Uterus (tissue), 4 donors: ENCODE measurements at regions of chr19 and their contacts with region 1.

Region 1: GRCh38 chr19:3324321-3324856 is 42.0 kb upstream of the NFIC start:
- DNase-seq: no peak
- H3K4me3 ChIP-seq: no peak overlapping the region
- H3K27ac ChIP-seq: no peak overlapping the region
- H3K4me1 ChIP-seq: no peaks in the 10 kb centered on the region
- H3K27me3 ChIP-seq: no peaks in the 10 kb centered on the region
- CTCF ChIP-seq: peak; percentile 35 to 57 (median 55)
- POLR2A ChIP-seq: no peak

Region 2: DNA sequence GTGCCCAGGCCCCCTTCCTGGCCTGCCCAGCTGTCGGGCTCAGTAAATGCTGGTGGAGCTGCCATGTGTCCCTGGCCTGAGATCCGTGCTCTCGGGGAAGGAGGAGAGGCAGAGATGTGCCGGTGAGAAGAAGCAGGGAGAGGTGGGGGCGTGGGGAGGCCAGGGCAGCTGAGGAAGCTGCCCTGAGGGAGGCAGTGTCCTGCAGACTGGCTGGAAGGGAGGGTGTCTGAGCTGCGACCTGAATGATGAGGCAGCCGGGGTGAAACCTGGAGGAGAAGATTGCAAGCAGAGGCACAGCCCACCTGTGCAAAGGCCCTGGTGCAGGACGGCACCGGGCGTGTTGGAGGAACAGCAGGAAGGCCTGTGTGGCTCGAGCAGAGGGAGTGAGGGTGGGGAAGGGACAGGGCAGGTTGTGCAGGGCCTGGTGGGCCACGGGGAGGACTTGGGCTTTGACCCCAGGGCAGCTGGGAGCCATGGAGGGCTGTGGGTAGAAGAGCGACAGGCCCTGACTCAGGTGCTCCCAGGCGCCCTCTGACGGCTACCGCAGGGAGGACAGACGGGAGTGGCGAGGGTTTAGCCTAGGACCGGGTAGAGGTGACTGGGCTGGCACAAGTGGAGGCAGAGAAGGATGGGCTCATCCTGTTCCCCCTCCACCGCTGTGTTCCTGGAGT is 113.9 kb before region 1 on chr19:
- intact Hi-C with region 1: no loop called
- DNase-seq: peak in 1 of 2 donors; percentile 31
- H3K4me3 ChIP-seq: no peak overlapping the region
- H3K27ac ChIP-seq: no peak overlapping the region
- H3K4me1 ChIP-seq: no peaks in the 10 kb centered on the region
- H3K27me3 ChIP-seq: no peaks in the 10 kb centered on the region
- CTCF ChIP-seq: peak in 3 of 4 experiments; percentile 32 to 55 (median 35)
- POLR2A ChIP-seq: no peak

Region 3: GRCh38 chr19:3429581-3430080 is 105.2 kb after region 1 on chr19:
- intact Hi-C with region 1: loop called (anchors 2 kb)
- DNase-seq: peak; percentile 97 to 98
- H3K4me3 ChIP-seq: no peak overlapping the region
- H3K27ac ChIP-seq: peak overlapping the region; percentile 86 to 90
- H3K4me1 ChIP-seq: peaks cover 0 to 11% of the 10 kb centered on the region in 2 donors
- H3K27me3 ChIP-seq: no peaks in the 10 kb centered on the region
- CTCF ChIP-seq: peak; percentile 96 to 98 (median 98)
- POLR2A ChIP-seq: no peak